ENCODE measurements at regions of chr4 and their contacts with region 1.

Region 1: GRCh38 chr4:150078637-150079581 is 664 bp downstream of the DCLK2 start:
- DNase-seq: peak; percentile 49
- H3K4me3 ChIP-seq: peak overlapping the region; percentile 56 to 83 (median 70)
- H3K27ac ChIP-seq: peak overlapping the region; percentile 85 to 91 (median 90)
- H3K4me1 ChIP-seq: peaks cover 0 to 25% (median 14%) of the 10 kb centered on the region in 4 donors
- H3K27me3 ChIP-seq: no peaks in the 10 kb centered on the region
- CTCF ChIP-seq: peak in 2 of 5 experiments; percentile 16 to 31
- EP300 ChIP-seq: no peak
- POLR2A ChIP-seq: no peak

Region 2: GRCh38 chr4:150150629-150151062 is 71.7 kb after region 1 on chr4:
- in situ Hi-C with region 1: no loop called
- intact Hi-C with region 1: loop called (anchors 2 kb)
- DNase-seq: no peak
- H3K4me3 ChIP-seq: no peak overlapping the region
- H3K27ac ChIP-seq: no peak overlapping the region
- H3K4me1 ChIP-seq: peaks cover 0 to 6% (median 0%) of the 10 kb centered on the region in 4 donors
- H3K27me3 ChIP-seq: no peaks in the 10 kb centered on the region
- CTCF ChIP-seq: no peak
- EP300 ChIP-seq: no peak
- POLR2A ChIP-seq: no peak

Region 3: DNA sequence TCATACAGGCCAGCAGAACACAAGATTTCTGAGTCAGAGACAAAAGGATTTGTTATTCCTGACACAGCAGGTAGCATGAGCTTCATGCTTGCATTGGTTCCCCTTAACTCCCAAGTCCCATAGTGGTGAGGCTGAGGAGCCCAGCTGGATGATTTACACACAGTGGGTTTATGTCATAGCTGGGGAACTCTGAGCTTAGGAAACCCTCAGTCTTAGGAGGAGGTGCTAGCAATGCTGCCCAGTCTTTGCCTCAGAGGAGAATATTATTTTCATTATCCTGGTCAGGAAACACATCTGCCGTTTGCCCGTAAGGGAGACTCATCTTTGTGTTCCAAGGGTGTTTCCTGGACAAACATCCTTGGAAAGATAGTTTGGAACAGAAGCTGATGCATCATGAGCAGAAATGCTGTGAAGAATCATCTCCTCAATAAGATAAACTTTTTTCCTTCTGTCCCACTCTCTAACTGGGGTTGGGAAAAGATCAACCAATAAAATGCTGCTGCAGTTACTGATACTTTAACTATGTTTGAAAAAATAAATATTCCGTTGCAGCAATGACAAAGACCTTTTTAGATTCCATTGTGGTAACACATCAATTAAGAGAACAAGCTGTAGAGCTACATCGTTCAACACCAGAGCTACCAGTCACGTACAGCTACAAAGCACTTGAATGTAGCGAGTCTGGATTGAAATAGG is 146.1 kb after region 1 on chr4:
- in situ Hi-C with region 1: no loop called
- intact Hi-C with region 1: loop called (anchors 10 kb)
- DNase-seq: no peak
- H3K4me3 ChIP-seq: no peak overlapping the region
- H3K27ac ChIP-seq: peak overlapping the region in 3 of 4 donors; percentile 22 to 53 (median 33)
- H3K4me1 ChIP-seq: no peaks in the 10 kb centered on the region
- H3K27me3 ChIP-seq: no peaks in the 10 kb centered on the region
- CTCF ChIP-seq: no peak
- EP300 ChIP-seq: no peak
- POLR2A ChIP-seq: no peak

Measured in transverse colon (tissue), 4 donors.